ENCODE measurements at regions of chr17 and their contacts with region 1.

Region 1: DNA sequence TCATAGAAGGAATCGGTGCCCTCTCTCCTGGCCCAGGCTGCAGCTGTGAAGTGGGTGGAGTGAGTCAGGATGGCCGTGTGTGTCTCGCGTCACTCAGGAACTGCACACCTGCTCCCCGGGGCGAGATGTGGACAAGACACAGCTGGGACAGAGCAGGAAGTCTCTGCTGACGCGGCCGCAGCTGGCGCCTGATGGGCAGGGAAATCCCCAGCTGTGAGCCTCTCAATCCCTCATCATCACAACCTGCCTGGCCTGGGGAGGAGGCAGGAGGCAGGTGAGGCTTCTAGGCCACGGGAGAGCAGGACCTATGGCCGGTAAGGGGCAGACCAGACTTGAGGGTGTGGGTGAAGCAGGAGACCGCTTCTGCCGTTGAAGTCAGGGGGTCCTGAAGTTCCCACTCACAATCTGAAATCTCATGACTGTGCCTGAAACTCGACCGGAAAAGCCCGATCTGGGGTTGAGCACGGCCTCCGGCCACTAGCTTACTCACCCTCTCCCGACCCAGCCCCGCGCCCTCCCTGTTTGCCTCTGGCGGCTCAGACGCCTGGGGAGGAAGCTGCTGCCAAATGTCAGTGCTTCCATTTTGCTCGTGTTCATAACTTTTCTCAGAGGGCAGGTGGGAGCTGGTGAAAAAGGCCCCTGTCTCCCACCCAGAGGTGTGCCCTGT is 1.1 kb upstream of the TRPV3 start:
- ATAC-seq: peak in 6 of 8 experiments; percentile 24 to 58 (median 38)
- H3K4me3 ChIP-seq: no peak overlapping the region
- H3K27ac ChIP-seq: no peak overlapping the region
- H3K4me1 ChIP-seq: peaks cover 0 to 5% of the 10 kb centered on the region in 2 donors

Region 2: DNA sequence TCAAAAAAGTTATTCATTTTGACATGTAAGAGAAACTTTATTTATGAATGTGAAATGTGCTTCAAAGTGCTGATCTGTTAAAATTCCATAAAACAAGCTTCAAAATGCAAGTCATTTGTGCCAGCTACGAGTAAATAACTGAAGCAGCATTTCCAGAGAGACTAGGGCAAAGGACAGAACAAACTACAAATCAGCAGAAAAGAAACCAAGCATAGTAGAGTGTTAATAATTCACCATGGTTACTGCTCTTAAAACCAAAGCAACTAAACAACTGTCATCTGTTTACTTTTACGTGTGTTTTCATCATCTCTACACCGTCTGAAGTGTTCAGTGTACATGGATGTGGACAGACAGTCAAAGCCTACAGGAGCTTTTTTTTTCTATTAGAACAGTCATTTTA is 84.5 kb before region 1 on chr17:
- in situ Hi-C with region 1: loop called in 1 of 9 experiments (anchors 25 kb)
- ATAC-seq: peak in 6 of 8 experiments; percentile 24 to 89 (median 32)
- H3K4me3 ChIP-seq: no peak overlapping the region
- H3K27ac ChIP-seq: no peak overlapping the region
- H3K4me1 ChIP-seq: peaks cover 7 to 8% of the 10 kb centered on the region in 2 donors

Region 3: DNA sequence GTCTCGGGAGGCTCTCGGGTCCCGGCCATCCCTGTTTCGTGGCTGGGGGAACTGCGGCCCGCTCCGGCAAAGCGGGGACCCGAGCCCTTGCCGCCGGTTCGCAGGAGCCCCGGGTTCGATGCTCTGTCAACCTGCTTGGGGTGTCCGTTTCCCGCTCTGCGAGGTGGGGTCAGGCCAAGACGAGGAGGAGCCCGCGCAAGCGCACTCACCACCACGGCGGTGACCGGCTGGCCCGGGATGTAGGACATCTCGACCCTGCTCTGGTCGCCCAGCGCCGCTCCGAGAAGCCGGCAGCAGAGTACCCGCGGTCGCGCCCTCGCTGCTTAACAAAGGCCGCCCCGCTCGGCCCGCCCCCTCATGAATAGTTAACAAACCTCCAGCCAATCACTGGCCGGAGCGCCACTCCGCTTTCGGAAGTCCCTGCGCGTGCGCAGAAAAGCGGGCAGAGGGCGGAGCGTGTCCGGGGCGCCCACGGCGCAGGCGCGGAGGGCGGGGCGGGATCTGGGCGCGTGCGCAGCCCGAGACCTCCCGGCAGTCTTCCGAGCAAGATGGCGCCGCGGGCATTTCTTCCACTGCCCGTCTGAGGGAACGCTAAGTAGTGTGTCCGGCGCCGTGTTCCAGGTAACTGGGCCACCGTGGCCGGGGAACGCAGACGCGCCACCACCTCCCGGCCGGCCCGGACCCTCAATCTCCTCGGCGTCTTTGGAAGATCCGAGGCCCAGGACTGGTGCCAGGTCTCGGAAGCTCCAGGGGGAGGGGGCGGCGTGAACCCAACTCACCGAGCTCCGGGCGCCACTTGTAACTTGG is 109.7 kb after region 1 on chr17 and contains the starts of genes EMC6 and TAX1BP3:
- in situ Hi-C with region 1: loop called in 1 of 9 experiments (anchors 25 kb)
- ATAC-seq: peak; percentile 74 to 95 (median 92)
- H3K4me3 ChIP-seq: peak within 1 kb of the TSS; percentile 73 to 96 (median 90)
- H3K27ac ChIP-seq: peak within 1 kb of the TSS; percentile 89 to 95
- H3K4me1 ChIP-seq: peaks cover 11 to 13% of the 10 kb centered on the region in 2 donors
- total RNA-seq, gene EMC6: 21.1 to 60.8 (median 38.2) TPM
- total RNA-seq, gene TAX1BP3: 19.2 to 314 (median 43.5) TPM